CD8-positive, alpha-beta memory T cell (primary cell): ENCODE measurements at regions of chr11 and their contacts with region 1.

Region 1: GRCh38 chr11:64304316-64305072 is 830 bp upstream of the ESRRA start:
- DNase-seq: peak; percentile 85 to 94 (median 90)
- H3K4me3 ChIP-seq: peak overlapping the region; percentile 92
- H3K4me3 Mint-ChIP-seq: peak overlapping the region; percentile 90 to 96 (median 94)
- H3K27ac ChIP-seq: peak overlapping the region; percentile 89
- H3K27ac Mint-ChIP-seq: peak overlapping the region; percentile 95 to 98 (median 97)
- H3K4me1 ChIP-seq: peaks cover 35% of the 10 kb centered on the region
- H3K4me1 Mint-ChIP-seq: peaks cover 32 to 49% (median 32%) of the 10 kb centered on the region in 3 donors
- H3K27me3 ChIP-seq: peaks cover 22% of the 10 kb centered on the region
- H3K27me3 Mint-ChIP-seq: peaks cover 19 to 20% of the 10 kb centered on the region in 2 donors

Region 2: GRCh38 chr11:64210301-64211055 is 94.0 kb before region 1 on chr11:
- CTCF ChIA-PET with region 1: interaction called, 281 read pairs
- POLR2A ChIA-PET with region 1: interaction called, 16 read pairs
- DNase-seq: no peak
- H3K4me3 ChIP-seq: no peak overlapping the region
- H3K4me3 Mint-ChIP-seq: peak overlapping the region in 2 of 7 donors; percentile 13 to 68
- H3K27ac ChIP-seq: no peak overlapping the region
- H3K27ac Mint-ChIP-seq: peak overlapping the region in 2 of 8 donors; percentile 24 to 50
- H3K4me1 ChIP-seq: peaks cover 23% of the 10 kb centered on the region
- H3K4me1 Mint-ChIP-seq: peaks cover 25 to 54% (median 29%) of the 10 kb centered on the region in 3 donors
- H3K27me3 ChIP-seq: no peaks in the 10 kb centered on the region
- H3K27me3 Mint-ChIP-seq: peaks cover 0 to 1% of the 10 kb centered on the region in 2 donors

Region 3: GRCh38 chr11:64246871-64247728 is 57.4 kb before region 1 on chr11 and contains the start of gene PPP1R14B:
- CTCF ChIA-PET with region 1: interaction called, 97 read pairs
- POLR2A ChIA-PET with region 1: interaction called, 15 read pairs
- DNase-seq: peak; percentile 66 to 86 (median 73)
- H3K4me3 ChIP-seq: peak within 1 kb of the TSS; percentile 100
- H3K4me3 Mint-ChIP-seq: peak within 1 kb of the TSS; percentile 83 to 96 (median 86)
- H3K27ac ChIP-seq: peak within 1 kb of the TSS; percentile 67
- H3K27ac Mint-ChIP-seq: peak within 1 kb of the TSS; percentile 79 to 96 (median 88)
- H3K4me1 ChIP-seq: peaks cover 42% of the 10 kb centered on the region
- H3K4me1 Mint-ChIP-seq: peaks cover 25 to 62% (median 29%) of the 10 kb centered on the region in 3 donors
- H3K27me3 ChIP-seq: no peaks in the 10 kb centered on the region
- H3K27me3 Mint-ChIP-seq: no peaks in the 10 kb centered on the region
- total RNA-seq, gene PPP1R14B: 365 to 381 TPM

Region 4: GRCh38 chr11:64284048-64284961 is 20.2 kb before region 1 on chr11 and contains the start of gene BAD:
- CTCF ChIA-PET with region 1: interaction called, 73 read pairs
- POLR2A ChIA-PET with region 1: interaction called, 14 read pairs
- DNase-seq: peak; percentile 87 to 96 (median 92)
- H3K4me3 ChIP-seq: peak within 1 kb of the TSS; percentile 100
- H3K4me3 Mint-ChIP-seq: peak within 1 kb of the TSS; percentile 86 to 98 (median 90)
- H3K27ac ChIP-seq: peak within 1 kb of the TSS; percentile 100
- H3K27ac Mint-ChIP-seq: peak within 1 kb of the TSS; percentile 97 to 100 (median 99)
- H3K4me1 ChIP-seq: peaks cover 22% of the 10 kb centered on the region
- H3K4me1 Mint-ChIP-seq: peaks cover 13 to 28% (median 21%) of the 10 kb centered on the region in 3 donors
- H3K27me3 ChIP-seq: no peaks in the 10 kb centered on the region
- H3K27me3 Mint-ChIP-seq: no peaks in the 10 kb centered on the region
- total RNA-seq, gene BAD: 40.4 to 40.9 TPM

Region 5: DNA sequence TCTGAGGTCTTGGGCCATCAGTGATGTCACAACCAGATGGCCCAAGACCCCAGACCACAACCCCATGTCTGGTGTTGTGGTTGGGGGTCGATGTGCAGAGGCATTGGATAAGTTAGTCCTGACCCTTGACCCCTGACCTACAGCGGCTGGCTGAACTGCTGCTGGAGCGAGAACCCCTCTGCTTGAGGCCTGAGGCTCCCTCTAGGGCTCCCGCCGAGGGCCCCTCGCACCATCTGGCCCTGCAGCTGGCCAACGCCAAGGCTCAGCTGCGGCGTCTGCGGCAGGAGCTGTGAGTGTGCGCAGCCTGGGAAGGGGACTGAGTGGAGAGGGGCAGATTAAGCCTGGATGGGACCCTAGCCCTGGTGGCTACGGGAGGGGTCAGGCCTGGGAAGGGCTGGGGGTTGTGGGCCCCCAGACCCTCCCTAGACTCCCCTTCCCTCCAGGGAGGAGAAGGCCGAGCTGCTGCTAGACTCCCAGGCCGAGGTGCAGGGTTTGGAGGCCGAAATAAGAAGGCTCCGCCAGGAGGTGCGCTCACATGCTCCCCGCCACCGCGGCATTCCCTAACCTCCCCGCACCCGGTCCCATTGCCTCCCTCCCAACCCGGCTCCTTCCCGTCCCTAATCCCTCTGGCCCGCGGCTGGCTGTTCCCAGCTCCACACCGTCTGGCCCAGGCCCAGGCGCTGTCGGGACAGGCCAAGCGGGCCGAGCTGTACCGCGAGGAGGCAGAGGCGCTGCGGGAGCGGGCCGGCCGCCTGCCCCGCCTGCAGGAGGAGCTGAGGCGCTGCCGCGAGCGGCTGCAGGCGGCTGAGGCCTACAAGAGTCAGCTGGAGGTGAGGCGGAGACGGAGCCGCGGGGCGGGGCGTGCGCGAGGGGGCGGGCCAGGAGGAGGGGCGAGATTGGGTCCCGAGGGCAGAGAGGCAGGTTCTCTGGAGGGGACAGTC is 37.6 kb after region 1 on chr11:
- CTCF ChIA-PET with region 1: interaction called, 13 read pairs
- POLR2A ChIA-PET with region 1: no interaction called
- DNase-seq: peak; percentile 81 to 87 (median 85)
- H3K4me3 ChIP-seq: peak overlapping the region; percentile 15
- H3K4me3 Mint-ChIP-seq: peak overlapping the region in 6 of 7 donors; percentile 27 to 87 (median 58)
- H3K27ac ChIP-seq: peak overlapping the region; percentile 54
- H3K27ac Mint-ChIP-seq: peak overlapping the region in 5 of 8 donors; percentile 23 to 79 (median 74)
- H3K4me1 ChIP-seq: peaks cover 32% of the 10 kb centered on the region
- H3K4me1 Mint-ChIP-seq: peaks cover 34 to 59% (median 37%) of the 10 kb centered on the region in 3 donors
- H3K27me3 ChIP-seq: no peaks in the 10 kb centered on the region
- H3K27me3 Mint-ChIP-seq: peaks cover 0 to 2% of the 10 kb centered on the region in 2 donors

Region 6: GRCh38 chr11:64590763-64591221 is 286.3 kb after region 1 on chr11 and contains the start of gene SLC22A12:
- CTCF ChIA-PET with region 1: no interaction called
- POLR2A ChIA-PET with region 1: no interaction called
- DNase-seq: peak in 1 of 5 donors; percentile 17
- H3K4me3 ChIP-seq: no peak within 1 kb of the TSS
- H3K4me3 Mint-ChIP-seq: no peak within 1 kb of the TSS
- H3K27ac ChIP-seq: no peak within 1 kb of the TSS
- H3K27ac Mint-ChIP-seq: no peak within 1 kb of the TSS
- H3K4me1 ChIP-seq: no peaks in the 10 kb centered on the region
- H3K4me1 Mint-ChIP-seq: no peaks in the 10 kb centered on the region
- H3K27me3 ChIP-seq: no peaks in the 10 kb centered on the region
- H3K27me3 Mint-ChIP-seq: peaks cover 11 to 29% of the 10 kb centered on the region in 2 donors
- total RNA-seq, gene SLC22A12: not detected

Region 7: GRCh38 chr11:64767344-64768299 is 463.1 kb after region 1 on chr11:
- CTCF ChIA-PET with region 1: no interaction called
- POLR2A ChIA-PET with region 1: no interaction called
- DNase-seq: peak; percentile 72 to 88 (median 79)
- H3K4me3 ChIP-seq: no peak overlapping the region
- H3K4me3 Mint-ChIP-seq: peak overlapping the region; percentile 33 to 83 (median 64)
- H3K27ac ChIP-seq: peak overlapping the region; percentile 17
- H3K27ac Mint-ChIP-seq: peak overlapping the region; percentile 84 to 95 (median 89)
- H3K4me1 ChIP-seq: peaks cover 91% of the 10 kb centered on the region
- H3K4me1 Mint-ChIP-seq: peaks cover 80 to 94% (median 89%) of the 10 kb centered on the region in 3 donors
- H3K27me3 ChIP-seq: no peaks in the 10 kb centered on the region
- H3K27me3 Mint-ChIP-seq: peaks cover 0 to 6% of the 10 kb centered on the region in 2 donors